ENCODE measurements at regions of chr11 and their contacts with region 1.

Region 1: DNA sequence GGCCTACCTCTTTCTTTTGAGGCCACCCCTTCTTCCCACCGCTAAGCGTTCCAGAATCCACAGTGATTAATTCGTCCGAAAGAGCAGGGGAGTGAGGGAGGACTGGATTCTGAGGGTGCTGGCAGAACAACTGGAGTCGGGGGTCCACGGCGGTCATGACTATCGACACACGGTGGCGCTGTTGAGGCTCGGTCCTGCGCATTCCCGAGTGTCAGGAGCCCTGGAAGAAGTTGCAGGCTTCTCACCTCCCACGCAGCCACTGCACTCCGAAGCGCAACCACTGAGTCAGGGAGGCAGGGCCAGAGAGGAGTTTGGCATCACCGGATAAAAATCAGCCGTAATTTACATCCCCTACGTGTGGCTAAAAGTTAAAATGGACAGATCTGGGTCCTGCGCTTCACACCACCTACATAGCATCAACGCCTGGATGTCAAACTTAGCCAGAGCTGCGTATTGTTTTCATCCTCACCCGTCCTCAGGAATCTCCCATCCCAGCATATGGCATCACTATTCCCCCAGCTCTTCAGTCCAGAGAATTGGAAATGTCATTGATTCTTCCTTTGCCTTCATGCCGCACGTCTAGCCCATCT is 10.7 kb upstream of the CTSF start:
- DNase-seq: peak; percentile 48
- H3K4me3 ChIP-seq: no peak overlapping the region; the same call in 1 of the 2 replicates
- H3K27ac ChIP-seq: no peak overlapping the region
- H3K27me3 ChIP-seq: no peaks in the 10 kb centered on the region
- CTCF ChIP-seq: peak; percentile 84

Region 2: GRCh38 chr11:66510271-66510989 is 68.7 kb before region 1 on chr11 and contains the start of gene BBS1:
- CTCF ChIA-PET with region 1: no interaction called
- POLR2A ChIA-PET with region 1: no interaction called
- DNase-seq: peak; percentile 26
- H3K4me3 ChIP-seq: peak within 1 kb of the TSS; percentile 97
- H3K27ac ChIP-seq: peak within 1 kb of the TSS; percentile 2
- H3K27me3 ChIP-seq: no peaks in the 10 kb centered on the region
- CTCF ChIP-seq: no peak; the same call in 1 of the 2 replicates
- polyA plus RNA-seq, gene BBS1: 17.7 and 21.1 TPM in 2 replicates

Region 3: GRCh38 chr11:66568124-66568916 is 10.8 kb before region 1 on chr11 and contains the start of gene CTSF:
- CTCF ChIA-PET with region 1: interaction called, 10 read pairs
- POLR2A ChIA-PET with region 1: no interaction called
- DNase-seq: peak; percentile 24
- H3K4me3 ChIP-seq: peak within 1 kb of the TSS; percentile 56
- H3K27ac ChIP-seq: no peak within 1 kb of the TSS
- H3K27me3 ChIP-seq: peaks cover 4% of the 10 kb centered on the region
- CTCF ChIP-seq: no peak
- polyA plus RNA-seq, gene CTSF: 24.3 and 28.1 TPM in 2 replicates

Measured in AG04450 (cell line).